Cardiac septum (tissue), 1 donor: ENCODE measurements at regions of chr7 and their contacts with region 1.

Region 1: DNA sequence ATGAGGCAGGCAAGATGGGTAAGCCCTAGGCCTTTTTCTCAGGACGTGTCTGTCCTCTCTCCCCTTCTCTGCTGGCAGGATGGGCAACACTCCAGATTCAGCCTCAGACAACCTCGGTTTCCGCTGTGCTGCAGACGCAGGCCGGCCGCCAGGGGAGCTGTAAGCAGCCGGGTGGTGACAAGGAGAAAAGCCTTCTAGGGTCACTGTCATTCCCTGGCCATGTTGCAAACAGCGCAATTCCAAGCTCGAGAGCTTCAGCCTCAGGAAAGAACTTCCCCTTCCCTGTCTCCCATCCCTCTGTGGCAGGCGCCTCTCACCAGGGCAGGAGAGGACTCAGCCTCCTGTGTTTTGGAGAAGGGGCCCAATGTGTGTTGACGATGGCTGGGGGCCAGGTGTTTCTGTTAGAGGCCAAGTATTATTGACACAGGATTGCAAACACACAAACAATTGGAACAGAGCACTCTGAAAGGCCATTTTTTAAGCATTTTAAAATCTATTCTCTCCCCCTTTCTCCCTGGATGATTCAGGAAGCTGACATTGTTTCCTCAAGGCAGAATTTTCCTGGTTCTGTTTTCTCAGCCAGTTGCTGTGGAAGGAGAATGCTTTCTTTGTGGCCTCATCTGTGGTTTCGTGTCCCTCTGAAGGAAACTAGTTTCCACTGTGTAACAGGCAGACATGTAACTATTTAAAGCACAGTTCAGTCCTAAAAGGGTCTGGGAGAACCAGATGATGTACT is 13.1 kb downstream of the PHKG1 start:
- DNase-seq: peak; percentile 91

Region 2: DNA sequence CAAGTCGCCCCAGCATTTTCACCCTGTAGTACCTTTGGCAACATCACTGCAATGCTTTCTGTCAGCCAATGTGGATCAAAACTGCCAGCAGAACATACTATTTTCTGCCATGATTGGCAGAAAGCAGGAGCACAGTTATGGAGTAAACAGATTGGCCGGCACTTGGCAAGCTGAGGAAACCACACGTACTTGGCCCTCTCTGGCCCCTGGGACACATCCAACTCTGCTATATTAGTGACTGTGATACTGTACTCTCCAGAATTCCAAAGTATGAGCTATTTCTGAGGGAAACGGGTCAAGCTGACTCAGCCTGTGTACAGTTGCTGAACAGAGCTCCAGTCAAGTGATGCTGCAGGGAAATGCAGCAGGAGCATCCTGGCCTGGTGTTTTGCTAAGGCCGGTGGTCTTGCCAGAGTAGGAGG is 754.2 kb before region 1 on chr7:
- intact Hi-C with region 1: no loop called
- DNase-seq: peak; percentile 79

Region 3: DNA sequence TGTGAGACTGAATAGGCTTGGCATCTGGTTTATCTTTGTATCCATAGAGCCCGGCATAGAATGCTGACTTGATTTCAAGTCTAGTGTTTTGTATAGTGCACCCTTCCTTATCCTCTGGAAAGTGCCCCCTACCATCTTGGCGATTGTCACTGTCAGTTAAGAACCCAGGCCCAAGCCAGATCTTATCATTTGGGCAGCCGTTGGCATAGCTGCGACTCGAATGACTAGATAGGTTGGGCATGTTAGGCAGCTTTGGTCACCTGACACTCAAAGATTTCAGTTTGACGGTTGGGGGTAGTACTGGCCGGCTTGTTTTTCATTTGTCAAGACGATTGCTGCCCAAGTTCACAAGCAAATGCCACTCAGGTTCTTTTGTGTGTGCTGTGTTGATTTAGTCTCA is 108.6 kb before region 1 on chr7:
- intact Hi-C with region 1: loop called (anchors 5 kb)
- DNase-seq: no peak